Dendritic cell treated with granulocyte-macrophage colony-stimulating factor and Interleukin-4, amounts not matched to agents 40 ng/mL and 50 ng/mL, for 4 days (primary cell): ENCODE measurements at regions of chr16 and their contacts with region 1.

Region 1: DNA sequence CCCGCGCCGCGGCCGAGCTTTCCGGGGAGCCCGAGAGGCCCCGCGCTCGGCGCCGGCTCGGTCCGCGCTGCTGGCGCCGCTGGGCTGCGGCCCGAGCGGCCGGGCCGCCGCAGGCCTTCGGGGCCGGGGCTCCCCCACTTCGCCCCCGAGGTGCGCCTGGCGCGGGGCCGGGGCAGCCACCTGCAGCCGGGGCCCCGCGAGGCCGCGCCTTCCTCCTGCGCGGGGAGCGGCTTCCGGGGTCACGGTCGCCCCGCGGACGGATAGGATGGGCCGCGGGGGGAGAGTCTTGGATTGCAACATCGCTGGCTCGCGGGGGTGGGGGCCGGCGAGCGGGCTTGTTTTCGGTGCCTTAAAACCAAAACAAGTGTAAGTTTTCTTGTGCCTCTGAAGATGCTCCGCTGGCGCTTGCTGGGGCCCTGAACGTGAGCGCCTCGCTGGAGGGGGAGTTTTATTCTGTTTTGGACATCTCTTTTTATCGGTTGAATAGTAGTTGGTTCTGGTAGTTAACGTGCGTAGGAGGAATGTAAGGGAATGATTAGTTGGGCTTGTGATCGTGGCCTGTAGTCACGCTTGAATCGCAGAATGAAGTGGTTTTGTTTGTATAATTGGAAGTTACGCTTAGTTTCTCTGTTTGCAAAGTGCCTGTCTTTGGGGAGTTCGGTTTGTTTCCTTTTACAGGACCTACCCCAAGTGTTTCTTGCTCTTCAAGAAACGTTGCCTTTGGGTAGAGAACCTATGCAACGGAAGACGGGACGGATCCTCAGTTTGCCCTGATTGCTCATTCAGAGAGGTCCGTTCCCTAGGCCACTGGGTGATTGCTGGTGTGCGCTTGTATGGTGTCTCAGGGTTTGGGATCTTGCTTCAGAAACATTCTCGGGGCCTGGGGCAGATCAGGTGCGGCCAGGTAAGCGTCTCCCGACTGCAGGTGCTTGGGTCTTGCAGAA is 724 bp downstream of the UBE2I start:
- H3K4me3 Mint-ChIP-seq: peak overlapping the region; percentile 96
- H3K27ac Mint-ChIP-seq: peak overlapping the region; percentile 86
- H3K4me1 Mint-ChIP-seq: peaks cover 50% of the 10 kb centered on the region
- H3K27me3 Mint-ChIP-seq: peaks cover 3% of the 10 kb centered on the region

Region 2: GRCh38 chr16:825341-826061 is 484.7 kb before region 1 on chr16:
- intact Hi-C with region 1: no loop called
- H3K4me3 Mint-ChIP-seq: no peak overlapping the region
- H3K27ac Mint-ChIP-seq: no peak overlapping the region
- H3K4me1 Mint-ChIP-seq: no peaks in the 10 kb centered on the region
- H3K27me3 Mint-ChIP-seq: peaks cover 16% of the 10 kb centered on the region

Region 3: GRCh38 chr16:1208239-1208830 is 101.8 kb before region 1 on chr16:
- intact Hi-C with region 1: no loop called
- H3K4me3 Mint-ChIP-seq: no peak overlapping the region
- H3K27ac Mint-ChIP-seq: no peak overlapping the region
- H3K4me1 Mint-ChIP-seq: no peaks in the 10 kb centered on the region
- H3K27me3 Mint-ChIP-seq: no peaks in the 10 kb centered on the region

Region 4: DNA sequence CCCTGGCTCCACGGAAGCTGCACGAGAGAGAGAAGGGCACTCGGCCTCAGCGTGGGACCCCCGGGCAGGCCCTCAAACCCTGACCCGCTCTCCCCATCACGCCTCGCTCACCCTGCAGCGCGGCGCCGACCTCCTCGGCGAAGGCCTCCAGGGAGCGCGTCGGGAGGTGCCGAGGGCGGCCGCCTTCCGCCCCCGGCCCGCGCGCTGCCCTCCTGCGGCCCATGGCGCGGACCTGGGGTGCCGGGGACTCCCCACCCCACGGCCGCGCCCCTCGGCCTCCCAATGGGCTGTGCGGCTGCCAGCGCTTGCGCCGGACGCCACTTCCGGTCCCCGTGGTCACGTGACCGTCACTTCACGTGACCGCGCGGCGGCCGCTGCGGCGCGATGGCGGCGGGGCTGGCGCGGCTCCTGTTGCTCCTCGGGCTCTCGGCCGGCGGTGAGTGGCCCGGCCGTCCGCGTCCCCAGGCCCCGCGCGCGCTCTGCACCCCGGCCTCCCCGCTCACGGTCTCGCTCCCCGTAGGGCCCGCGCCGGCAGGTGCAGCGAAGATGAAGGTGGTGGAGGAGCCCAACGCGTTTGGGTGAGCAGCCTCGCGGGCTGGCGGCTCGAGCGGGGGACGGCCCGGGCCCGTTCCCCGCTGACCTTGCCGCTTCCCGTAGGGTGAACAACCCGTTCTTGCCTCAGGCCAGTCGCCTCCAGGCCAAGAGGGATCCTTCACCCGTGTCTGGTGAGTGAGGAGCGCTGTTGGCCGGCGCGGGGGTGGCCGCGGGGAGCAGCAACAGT is 41.6 kb after region 1 on chr16 and contains the starts of genes GNPTG and TSR3:
- intact Hi-C with region 1: loop called (anchors 5 kb)
- H3K4me3 Mint-ChIP-seq: peak within 1 kb of the TSS; percentile 89
- H3K27ac Mint-ChIP-seq: peak within 1 kb of the TSS; percentile 90
- H3K4me1 Mint-ChIP-seq: peaks cover 56% of the 10 kb centered on the region
- H3K27me3 Mint-ChIP-seq: no peaks in the 10 kb centered on the region

Region 5: GRCh38 chr16:1377406-1378010 is 67.3 kb after region 1 on chr16:
- intact Hi-C with region 1: no loop called
- H3K4me3 Mint-ChIP-seq: peak overlapping the region; percentile 61
- H3K27ac Mint-ChIP-seq: no peak overlapping the region
- H3K4me1 Mint-ChIP-seq: peaks cover 17% of the 10 kb centered on the region
- H3K27me3 Mint-ChIP-seq: no peaks in the 10 kb centered on the region

Region 6: GRCh38 chr16:1408171-1408837 is 98.1 kb after region 1 on chr16:
- intact Hi-C with region 1: loop called (anchors 10 kb)
- H3K4me3 Mint-ChIP-seq: peak overlapping the region; percentile 93
- H3K27ac Mint-ChIP-seq: peak overlapping the region; percentile 65
- H3K4me1 Mint-ChIP-seq: peaks cover 17% of the 10 kb centered on the region
- H3K27me3 Mint-ChIP-seq: no peaks in the 10 kb centered on the region

Region 7: DNA sequence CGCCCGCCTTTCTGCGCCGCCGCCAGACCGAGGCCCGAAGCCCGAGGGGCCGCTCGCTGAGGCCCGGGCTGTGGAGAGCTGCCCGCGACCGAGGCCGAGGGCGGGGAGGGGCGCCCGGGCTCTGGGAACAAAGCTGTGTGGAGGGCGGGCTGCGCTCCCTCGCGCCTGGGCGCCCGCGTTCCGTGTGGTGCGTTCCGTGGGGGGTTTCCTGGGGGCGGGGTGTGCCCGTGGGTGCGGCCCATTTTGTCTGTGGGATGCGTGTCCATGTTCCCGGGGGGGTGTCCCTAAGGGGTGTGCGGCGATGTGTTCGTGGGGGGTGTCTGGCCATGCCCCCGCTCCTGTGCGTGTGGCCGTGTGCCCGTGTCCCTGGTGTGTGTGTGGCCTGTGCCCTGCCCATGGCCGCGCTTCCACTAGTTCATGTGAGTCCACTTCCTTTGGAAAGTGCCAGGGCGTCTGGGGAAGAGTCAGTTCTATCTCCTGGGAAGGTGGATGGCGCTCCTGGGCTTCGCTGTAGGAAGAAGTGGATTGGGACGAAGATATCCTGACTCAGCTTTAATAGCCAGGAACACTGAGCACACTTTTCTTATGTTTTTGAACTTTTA is 368.4 kb after region 1 on chr16:
- intact Hi-C with region 1: no loop called
- H3K4me3 Mint-ChIP-seq: peak overlapping the region; percentile 90
- H3K27ac Mint-ChIP-seq: peak overlapping the region; percentile 80
- H3K4me1 Mint-ChIP-seq: peaks cover 23% of the 10 kb centered on the region
- H3K27me3 Mint-ChIP-seq: no peaks in the 10 kb centered on the region